ENCODE measurements at regions of chr19 and their contacts with region 1.

Region 1: DNA sequence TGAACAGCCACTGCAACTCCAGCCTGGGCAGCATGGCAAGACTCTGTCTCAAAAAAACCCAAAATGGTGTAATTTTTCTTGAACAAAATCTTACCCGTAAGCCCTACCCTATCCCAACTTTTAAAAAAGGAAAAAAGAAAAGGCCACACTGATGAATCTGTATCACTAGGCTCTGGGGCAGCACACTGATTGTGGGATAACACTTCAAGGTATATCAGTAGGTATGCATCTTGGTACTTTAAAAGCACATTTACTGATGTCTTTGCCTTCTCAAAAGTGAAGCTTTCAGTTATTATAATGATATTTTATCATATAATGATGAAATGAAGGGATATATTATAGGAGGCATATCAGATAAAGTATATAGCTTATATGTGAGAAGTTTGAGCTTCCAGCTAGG is 24.3 kb downstream of the ZNF112 start:
- DNase-seq: no peak
- H3K4me3 ChIP-seq: no peak overlapping the region
- H3K27ac ChIP-seq: no peak overlapping the region
- H3K4me1 ChIP-seq: no peaks in the 10 kb centered on the region
- H3K27me3 ChIP-seq: no peaks in the 10 kb centered on the region
- CTCF ChIP-seq: no peak
- POLR2A ChIP-seq: no peak

Region 2: DNA sequence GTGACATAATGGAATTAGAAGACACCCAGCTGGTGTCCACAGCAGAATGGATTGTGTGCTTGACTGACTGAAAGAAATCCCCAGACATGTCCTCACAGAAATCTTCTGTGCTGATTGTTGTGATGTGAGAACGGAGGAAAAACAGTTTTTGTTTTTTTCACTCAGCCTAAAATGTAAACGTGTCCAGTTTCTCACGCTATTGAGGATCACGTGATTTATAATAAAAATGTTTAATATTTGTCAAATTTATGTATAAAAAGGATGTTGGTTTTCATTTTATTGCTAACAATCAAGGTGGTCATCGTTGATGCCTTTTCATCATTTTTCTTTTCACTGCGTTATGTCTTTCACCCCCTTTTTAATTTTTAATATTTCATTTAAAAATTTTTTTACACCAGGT is 128.0 kb after region 1 on chr19:
- intact Hi-C with region 1: loop called in 1 of 2 experiments (anchors 10 kb)
- DNase-seq: no peak
- H3K4me3 ChIP-seq: no peak overlapping the region
- H3K27ac ChIP-seq: no peak overlapping the region
- H3K4me1 ChIP-seq: no peaks in the 10 kb centered on the region
- H3K27me3 ChIP-seq: no peaks in the 10 kb centered on the region
- CTCF ChIP-seq: no peak
- POLR2A ChIP-seq: no peak